HEK293 (cell line): ENCODE measurements at regions of chr19 and their contacts with region 1.

Region 1: DNA sequence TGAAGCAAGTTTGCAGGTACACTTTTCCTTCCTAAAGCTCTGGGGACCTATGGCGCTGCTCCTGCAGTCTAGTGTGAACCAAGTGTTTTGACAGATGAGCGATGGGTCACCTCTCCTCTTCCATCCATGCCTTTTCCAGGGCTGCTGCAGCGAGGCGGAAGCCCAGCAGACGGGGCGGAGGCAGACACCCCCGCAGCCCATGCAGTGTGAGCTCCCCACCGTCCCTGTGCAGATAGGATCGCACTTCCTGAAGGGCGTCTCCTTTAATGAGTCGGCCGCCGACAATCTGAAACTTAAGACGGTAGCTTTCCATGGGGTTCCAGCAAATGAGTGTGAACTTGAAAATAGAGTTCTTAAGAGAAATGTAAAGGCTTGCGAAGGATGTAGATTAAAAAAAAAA is 37.1 kb upstream of the GPI start:
- H3K4me3 ChIP-seq: no peak overlapping the region
- H3K27ac ChIP-seq: no peak overlapping the region
- H3K4me1 ChIP-seq: peaks cover 8% of the 10 kb centered on the region; the same call in 1 of the 2 replicates
- CTCF ChIP-seq: no peak

Region 2: GRCh38 chr19:34317311-34317927 is 10.4 kb before region 1 on chr19:
- CTCF ChIA-PET with region 1: interaction called, 21 read pairs
- POLR2A ChIA-PET with region 1: interaction called, 7 read pairs
- H3K4me3 ChIP-seq: no peak overlapping the region
- H3K27ac ChIP-seq: peak overlapping the region; percentile 3; the same call in 1 of the 2 replicates
- H3K4me1 ChIP-seq: peaks cover 30% of the 10 kb centered on the region
- CTCF ChIP-seq: no peak